ENCODE measurements at regions of chr19 and their contacts with region 1.

Region 1: DNA sequence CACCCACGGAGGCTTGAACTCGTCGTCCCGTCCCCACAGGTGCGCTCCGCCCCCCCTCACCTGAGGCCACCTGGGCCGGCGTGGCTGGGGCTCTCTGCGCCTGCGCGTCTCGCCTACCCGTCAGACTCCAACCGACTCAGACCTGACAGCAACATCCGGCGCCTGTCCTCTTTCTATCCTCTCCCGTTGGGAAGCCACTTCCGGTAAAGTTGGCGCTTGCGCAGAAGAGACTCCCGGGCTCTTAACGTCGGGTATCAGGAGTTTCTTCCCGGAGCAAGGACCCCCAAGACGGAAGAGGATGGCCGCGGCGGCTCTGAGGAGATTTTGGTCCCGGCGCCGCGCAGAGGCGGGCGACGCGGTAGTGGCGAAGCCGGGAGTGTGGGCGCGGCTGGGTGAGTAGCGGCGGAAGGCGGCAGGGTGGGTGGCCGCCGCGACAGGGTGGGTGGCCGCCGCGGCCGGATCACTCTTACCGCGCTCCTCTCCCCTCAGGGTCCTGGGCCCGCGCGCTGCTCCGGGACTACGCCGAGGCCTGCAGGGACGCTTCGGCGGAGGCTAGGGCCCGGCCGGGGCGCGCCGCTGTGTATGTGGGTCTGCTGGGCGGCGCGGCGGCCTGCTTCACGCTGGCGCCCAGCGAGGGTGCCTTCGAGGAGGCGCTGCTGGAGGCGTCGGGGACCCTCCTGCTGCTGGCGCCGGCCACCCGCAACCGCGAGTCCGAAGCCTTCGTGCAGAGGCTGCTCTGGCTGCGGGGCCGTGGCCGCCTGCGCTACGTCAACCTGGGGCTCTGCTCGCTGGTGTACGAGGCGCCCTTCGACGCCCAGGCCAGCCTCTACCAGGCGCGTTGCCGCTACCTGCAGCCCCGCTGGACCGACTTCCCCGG is at the starts of genes TIMM29 and YIPF2:
- DNase-seq: peak; percentile 98
- H3K4me3 ChIP-seq: peak within 1 kb of the TSS; percentile 84 to 98 (median 93)
- H3K27ac ChIP-seq: peak within 1 kb of the TSS; percentile 45
- H3K4me1 ChIP-seq: peaks cover 18% of the 10 kb centered on the region
- H3K27me3 ChIP-seq: no peaks in the 10 kb centered on the region
- CTCF ChIP-seq: no peak
- total RNA-seq, gene TIMM29: 17.2 to 28.8 TPM
- total RNA-seq, gene YIPF2: 57.1 to 112 TPM

Region 2: GRCh38 chr19:10717356-10718204 is 211.2 kb before region 1 on chr19 and contains the start of gene DNM2:
- CTCF ChIA-PET with region 1: no interaction called
- dilution Hi-C with region 1: no loop called
- in situ Hi-C with region 1: no loop called
- intact Hi-C with region 1: no loop called
- DNase-seq: peak; percentile 100
- H3K4me3 ChIP-seq: peak within 1 kb of the TSS; percentile 63 to 99 (median 97)
- H3K27ac ChIP-seq: peak within 1 kb of the TSS; percentile 31
- H3K4me1 ChIP-seq: peaks cover 12% of the 10 kb centered on the region
- H3K27me3 ChIP-seq: no peaks in the 10 kb centered on the region
- CTCF ChIP-seq: peak; percentile 82 to 88
- total RNA-seq, gene DNM2: 95.9 to 125 TPM

Region 3: DNA sequence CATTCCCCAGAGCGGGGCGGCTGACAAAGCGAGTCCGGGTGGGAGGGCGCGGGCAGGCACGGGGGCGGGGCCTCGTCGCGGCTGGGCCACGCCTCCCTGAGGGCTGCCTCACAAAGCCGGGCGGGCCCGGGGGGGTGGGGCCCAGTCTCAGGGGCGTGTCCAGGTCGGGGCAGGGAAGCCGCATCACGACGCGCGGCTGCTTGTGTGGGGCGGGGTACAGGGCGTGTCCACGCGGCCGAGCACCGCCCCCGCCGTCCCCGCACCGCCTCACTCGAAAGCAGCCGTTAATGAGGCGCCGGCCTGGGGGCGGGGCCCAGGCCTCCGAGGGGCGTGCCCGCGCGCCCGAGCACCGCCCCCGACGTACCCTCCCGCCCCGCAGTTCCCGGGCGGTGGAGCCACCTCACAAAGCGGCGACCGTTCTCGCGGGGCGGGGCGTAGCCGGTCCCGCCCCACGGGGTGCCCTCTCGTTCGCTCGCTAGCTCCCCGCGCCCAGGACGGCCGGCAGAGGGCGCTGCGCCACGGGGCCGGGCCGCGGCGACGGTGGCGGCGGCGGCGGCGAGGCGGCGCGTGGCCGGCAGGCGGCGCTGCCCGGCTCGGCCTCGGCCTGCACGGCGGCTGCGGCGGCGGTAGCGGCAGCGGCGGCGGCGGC is 57.7 kb before region 1 on chr19 and contains the start of gene CARM1:
- CTCF ChIA-PET with region 1: no interaction called
- dilution Hi-C with region 1: no loop called
- in situ Hi-C with region 1: loop called in 1 of 2 experiments (anchors 5 kb)
- intact Hi-C with region 1: loop called (anchors 2 kb)
- DNase-seq: peak; percentile 97
- H3K4me3 ChIP-seq: peak within 1 kb of the TSS; percentile 78 to 90 (median 85)
- H3K27ac ChIP-seq: peak within 1 kb of the TSS; percentile 51
- H3K4me1 ChIP-seq: peaks cover 4% of the 10 kb centered on the region
- H3K27me3 ChIP-seq: no peaks in the 10 kb centered on the region
- CTCF ChIP-seq: peak; percentile 49 to 60
- total RNA-seq, gene CARM1: 29.2 to 58.5 TPM

Region 4: GRCh38 chr19:10876459-10877240 is 52.1 kb before region 1 on chr19:
- CTCF ChIA-PET with region 1: no interaction called
- dilution Hi-C with region 1: no loop called
- in situ Hi-C with region 1: loop called in 1 of 2 experiments (anchors 5 kb)
- intact Hi-C with region 1: loop called (anchors 2 kb)
- DNase-seq: no peak
- H3K4me3 ChIP-seq: no peak overlapping the region
- H3K27ac ChIP-seq: no peak overlapping the region
- H3K4me1 ChIP-seq: peaks cover 8% of the 10 kb centered on the region
- H3K27me3 ChIP-seq: no peaks in the 10 kb centered on the region
- CTCF ChIP-seq: no peak

Region 5: GRCh38 chr19:10891405-10892086 is 37.2 kb before region 1 on chr19:
- CTCF ChIA-PET with region 1: no interaction called
- dilution Hi-C with region 1: no loop called
- in situ Hi-C with region 1: no loop called
- intact Hi-C with region 1: loop called (anchors 2 kb)
- DNase-seq: peak; percentile 76
- H3K4me3 ChIP-seq: peak overlapping the region in 1 of 3 experiments; percentile 7
- H3K27ac ChIP-seq: peak overlapping the region; percentile 50
- H3K4me1 ChIP-seq: peaks cover 31% of the 10 kb centered on the region
- H3K27me3 ChIP-seq: no peaks in the 10 kb centered on the region
- CTCF ChIP-seq: no peak

Region 6: DNA sequence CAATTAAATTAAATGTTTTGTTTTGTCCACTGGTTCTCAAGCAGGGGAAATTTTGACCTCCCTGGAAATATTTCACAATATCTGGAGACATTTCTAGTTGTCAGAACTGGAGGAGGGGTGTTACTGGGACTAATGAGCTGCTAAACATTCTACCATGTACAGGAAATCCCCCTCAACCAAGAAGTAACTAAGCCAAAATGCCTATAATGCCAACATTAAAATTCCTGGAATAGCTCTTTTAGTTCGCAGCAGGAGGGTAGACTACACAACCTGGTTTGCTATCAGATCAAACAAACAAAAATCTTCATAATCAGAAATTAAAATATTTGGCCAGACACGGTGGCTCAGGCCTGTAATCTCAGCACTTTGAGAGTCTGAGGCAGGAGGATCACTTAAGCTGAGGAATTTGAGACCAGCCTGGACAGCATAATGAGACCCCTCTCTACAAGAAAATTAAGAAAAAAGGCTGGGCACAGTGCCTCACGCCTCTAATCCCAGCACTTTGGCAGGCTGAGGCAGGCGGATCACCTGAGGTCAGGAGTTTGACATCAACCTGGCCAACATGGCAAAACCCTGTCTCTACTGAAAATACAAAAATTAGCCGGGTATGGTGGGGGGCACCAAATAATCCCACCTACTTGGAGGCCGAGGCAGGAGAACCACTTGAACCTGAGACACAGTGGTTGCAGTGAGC is 18.3 kb after region 1 on chr19:
- CTCF ChIA-PET with region 1: no interaction called
- dilution Hi-C with region 1: no loop called
- in situ Hi-C with region 1: no loop called
- intact Hi-C with region 1: no loop called
- DNase-seq: no peak
- H3K4me3 ChIP-seq: no peak overlapping the region
- H3K27ac ChIP-seq: no peak overlapping the region
- H3K4me1 ChIP-seq: no peaks in the 10 kb centered on the region
- H3K27me3 ChIP-seq: no peaks in the 10 kb centered on the region
- CTCF ChIP-seq: no peak

Measured in mammary epithelial cell (primary cell).